SK-N-SH (cell line): ENCODE measurements at regions of chr5 and their contacts with region 1.

Region 1: GRCh38 chr5:141825791-141826560 is 52.2 kb downstream of the PCDH1 start:
- DNase-seq: peak; percentile 64
- H3K4me3 ChIP-seq: no peak overlapping the region; a peak in 1 of 4 replicates
- H3K27ac ChIP-seq: peak overlapping the region in 1 of 2 experiments; percentile 66; a peak in 2 of 4 replicates
- H3K4me1 ChIP-seq: peaks cover 8 to 42% of the 10 kb centered on the region in 2 experiments; a peak in 2 of 4 replicates
- H3K27me3 ChIP-seq: peaks cover 7% of the 10 kb centered on the region
- CTCF ChIP-seq: peak; percentile 55
- EP300 ChIP-seq: no peak
- RAD21 ChIP-seq: peak; percentile 44

Region 2: DNA sequence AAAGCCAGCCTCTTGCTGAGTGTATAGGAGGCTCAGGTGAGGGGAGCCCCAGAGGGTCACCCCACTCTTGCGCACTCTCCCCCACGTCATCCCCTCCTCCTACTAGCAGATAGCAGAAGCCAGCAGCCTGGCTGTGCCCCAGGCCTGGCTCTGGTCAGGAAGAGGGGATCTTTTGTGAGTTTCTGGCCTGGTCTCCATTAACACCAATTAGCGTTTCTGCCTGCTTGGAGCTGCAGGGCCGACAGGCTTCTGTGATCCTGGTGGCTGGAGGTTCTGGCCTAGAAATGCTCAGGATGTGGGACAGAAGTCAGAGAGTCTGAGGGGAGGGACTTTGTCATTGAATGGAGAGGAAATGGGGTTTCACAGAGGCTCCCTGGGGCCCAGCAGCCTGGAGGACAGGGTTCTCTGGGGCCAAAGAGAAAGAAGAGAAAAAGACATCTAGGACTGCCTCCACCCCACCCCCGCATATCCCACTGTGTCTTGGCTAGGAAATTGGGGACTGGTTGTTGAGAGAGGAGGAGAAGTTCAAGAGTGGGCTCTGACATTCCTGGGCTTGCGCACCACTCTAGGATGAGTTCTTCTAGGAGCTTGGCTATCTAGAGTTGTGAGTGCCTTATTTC is 96.5 kb before region 1 on chr5:
- CTCF ChIA-PET with region 1: interaction called, 11 read pairs
- POLR2A ChIA-PET with region 1: interaction called, 3 read pairs
- DNase-seq: peak; percentile 78
- H3K4me3 ChIP-seq: no peak overlapping the region
- H3K27ac ChIP-seq: peak overlapping the region in 1 of 2 experiments; percentile 96; a peak in 2 of 4 replicates
- H3K4me1 ChIP-seq: peaks cover 0 to 51% of the 10 kb centered on the region in 2 experiments; a peak in 2 of 4 replicates
- H3K27me3 ChIP-seq: peaks cover 10% of the 10 kb centered on the region
- CTCF ChIP-seq: no peak
- EP300 ChIP-seq: peak in 1 of 2 experiments; percentile 97; a peak in 2 of 4 replicates
- RAD21 ChIP-seq: peak; percentile 41

Region 3: DNA sequence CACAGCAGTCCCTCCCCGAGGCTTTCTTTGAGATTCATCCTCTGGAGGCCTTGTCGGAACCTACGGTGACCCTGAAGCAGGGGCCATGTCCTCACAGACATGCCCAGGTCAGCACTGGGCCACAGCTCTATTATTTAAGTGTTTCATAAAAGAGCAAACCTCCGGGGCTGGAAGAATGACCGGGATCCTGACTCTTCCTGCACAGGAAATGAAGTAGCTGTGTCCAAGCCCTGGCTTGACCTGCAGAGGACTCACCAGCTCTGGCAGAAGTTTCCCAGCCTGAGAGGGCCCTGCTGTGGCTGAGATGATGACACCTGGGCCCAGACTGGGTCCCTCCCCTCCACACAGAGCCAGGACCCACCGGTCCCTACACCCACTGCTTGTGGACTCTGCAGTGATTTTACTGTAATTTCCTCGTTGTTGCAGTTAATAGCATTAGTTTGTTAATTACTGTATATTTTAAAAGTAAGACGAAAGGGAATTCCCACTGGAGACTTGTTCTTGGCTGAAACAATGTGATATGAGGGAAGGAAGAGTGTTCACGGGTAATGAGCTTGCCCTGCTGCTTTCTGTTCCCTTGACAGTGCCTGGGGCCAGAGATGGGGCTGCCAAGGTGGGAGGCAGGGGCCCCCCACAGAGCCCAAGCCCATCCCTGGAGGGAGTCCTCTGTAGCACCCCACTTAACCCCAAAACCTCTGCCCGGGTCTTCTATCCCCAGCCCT is 19.9 kb before region 1 on chr5:
- CTCF ChIA-PET with region 1: interaction called, 137 read pairs
- POLR2A ChIA-PET with region 1: interaction called, 3 read pairs
- DNase-seq: no peak
- H3K4me3 ChIP-seq: no peak overlapping the region
- H3K27ac ChIP-seq: no peak overlapping the region
- H3K4me1 ChIP-seq: peaks cover 0 to 9% of the 10 kb centered on the region in 2 experiments; a peak in 1 of 4 replicates
- H3K27me3 ChIP-seq: peaks cover 52% of the 10 kb centered on the region
- CTCF ChIP-seq: no peak
- EP300 ChIP-seq: no peak
- RAD21 ChIP-seq: no peak

Region 4: GRCh38 chr5:141835928-141836670 is 10.1 kb after region 1 on chr5:
- CTCF ChIA-PET with region 1: interaction called, 48 read pairs
- POLR2A ChIA-PET with region 1: interaction called, 12 read pairs
- DNase-seq: no peak
- H3K4me3 ChIP-seq: no peak overlapping the region
- H3K27ac ChIP-seq: no peak overlapping the region
- H3K4me1 ChIP-seq: peaks cover 0 to 59% of the 10 kb centered on the region in 2 experiments; a peak in 2 of 4 replicates
- H3K27me3 ChIP-seq: peaks cover 17% of the 10 kb centered on the region; the same call in 1 of the 2 replicates
- CTCF ChIP-seq: no peak
- EP300 ChIP-seq: no peak
- RAD21 ChIP-seq: no peak

Region 5: DNA sequence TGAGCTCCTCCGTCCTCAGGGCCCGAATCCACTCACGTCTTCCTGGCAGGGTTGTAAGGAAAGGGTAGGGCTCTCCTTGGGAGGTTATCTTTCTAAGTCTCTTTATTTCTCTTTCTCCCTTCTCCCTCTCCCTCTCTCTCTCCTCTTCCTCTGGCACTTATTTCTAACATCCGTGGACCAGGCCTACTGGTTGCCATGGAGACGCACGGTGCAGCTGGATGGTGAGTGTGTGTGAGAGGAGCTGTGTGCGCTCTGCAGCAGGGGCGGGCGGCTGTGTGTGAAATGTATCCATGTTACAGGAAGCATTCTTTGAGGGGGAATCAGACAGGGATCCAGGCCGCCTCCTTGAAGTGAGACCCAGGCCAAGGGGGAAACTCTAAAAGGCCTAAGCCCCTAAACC is 20.1 kb after region 1 on chr5:
- CTCF ChIA-PET with region 1: interaction called, 25 read pairs
- POLR2A ChIA-PET with region 1: interaction called, 9 read pairs
- DNase-seq: peak; percentile 82
- H3K4me3 ChIP-seq: no peak overlapping the region; a peak in 1 of 4 replicates
- H3K27ac ChIP-seq: peak overlapping the region in 1 of 2 experiments; percentile 80; a peak in 2 of 4 replicates
- H3K4me1 ChIP-seq: peaks cover 8 to 64% of the 10 kb centered on the region in 2 experiments; a peak in 3 of 4 replicates
- H3K27me3 ChIP-seq: peaks cover 2% of the 10 kb centered on the region; the same call in 1 of the 2 replicates
- CTCF ChIP-seq: no peak
- EP300 ChIP-seq: no peak; a peak in 1 of 4 replicates
- RAD21 ChIP-seq: no peak

Region 6: GRCh38 chr5:141866149-141867120 is 40.5 kb after region 1 on chr5:
- CTCF ChIA-PET with region 1: no interaction called
- POLR2A ChIA-PET with region 1: no interaction called
- DNase-seq: no peak
- H3K4me3 ChIP-seq: no peak overlapping the region
- H3K27ac ChIP-seq: no peak overlapping the region
- H3K4me1 ChIP-seq: peaks cover 0 to 9% of the 10 kb centered on the region in 2 experiments; a peak in 1 of 4 replicates
- H3K27me3 ChIP-seq: peaks cover 40% of the 10 kb centered on the region
- CTCF ChIP-seq: no peak
- EP300 ChIP-seq: no peak
- RAD21 ChIP-seq: no peak

Region 7: DNA sequence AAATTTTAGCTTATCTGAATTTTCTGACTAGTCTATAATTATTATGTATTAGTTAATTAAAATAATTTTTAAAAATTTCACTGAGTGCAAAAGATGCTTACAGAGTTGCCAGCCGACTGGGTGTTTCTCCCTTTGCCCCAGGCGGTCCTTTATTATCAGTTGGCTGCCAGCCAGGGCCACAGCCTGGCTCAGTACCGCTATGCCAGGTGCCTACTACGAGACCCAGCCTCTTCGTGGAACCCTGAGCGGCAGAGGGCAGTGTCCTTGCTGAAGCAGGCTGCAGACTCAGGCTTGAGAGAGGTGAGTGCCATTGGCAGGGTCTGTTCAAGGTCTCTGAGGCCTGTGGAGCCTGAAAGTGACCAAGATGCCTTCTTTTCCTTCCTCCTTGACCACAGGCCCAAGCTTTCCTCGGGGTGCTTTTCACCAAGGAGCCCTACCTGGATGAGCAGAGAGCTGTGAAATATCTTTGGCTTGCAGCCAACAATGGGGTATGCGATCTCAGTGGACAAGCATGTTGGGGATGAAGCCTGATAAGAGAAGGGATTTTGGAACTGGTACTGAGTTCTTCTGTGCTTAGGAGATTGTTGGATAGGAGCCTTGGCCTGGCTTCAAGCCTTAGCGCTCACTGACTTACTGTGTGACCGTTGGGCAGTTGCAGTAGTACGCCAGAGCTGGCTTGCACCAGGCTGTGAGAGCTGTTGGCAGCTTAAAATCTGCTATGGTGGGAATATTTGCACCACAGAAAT is 108.3 kb after region 1 on chr5:
- CTCF ChIA-PET with region 1: no interaction called
- POLR2A ChIA-PET with region 1: no interaction called
- DNase-seq: peak; percentile 84
- H3K4me3 ChIP-seq: no peak overlapping the region
- H3K27ac ChIP-seq: peak overlapping the region in 1 of 2 experiments; percentile 58; a peak in 2 of 4 replicates
- H3K4me1 ChIP-seq: peaks cover 0 to 18% of the 10 kb centered on the region in 2 experiments; a peak in 2 of 4 replicates
- H3K27me3 ChIP-seq: no peaks in the 10 kb centered on the region
- CTCF ChIP-seq: no peak
- EP300 ChIP-seq: no peak
- RAD21 ChIP-seq: peak; percentile 39